Caco-2 (cell line): ENCODE measurements at regions of chr14 and their contacts with region 1.

Region 1: DNA sequence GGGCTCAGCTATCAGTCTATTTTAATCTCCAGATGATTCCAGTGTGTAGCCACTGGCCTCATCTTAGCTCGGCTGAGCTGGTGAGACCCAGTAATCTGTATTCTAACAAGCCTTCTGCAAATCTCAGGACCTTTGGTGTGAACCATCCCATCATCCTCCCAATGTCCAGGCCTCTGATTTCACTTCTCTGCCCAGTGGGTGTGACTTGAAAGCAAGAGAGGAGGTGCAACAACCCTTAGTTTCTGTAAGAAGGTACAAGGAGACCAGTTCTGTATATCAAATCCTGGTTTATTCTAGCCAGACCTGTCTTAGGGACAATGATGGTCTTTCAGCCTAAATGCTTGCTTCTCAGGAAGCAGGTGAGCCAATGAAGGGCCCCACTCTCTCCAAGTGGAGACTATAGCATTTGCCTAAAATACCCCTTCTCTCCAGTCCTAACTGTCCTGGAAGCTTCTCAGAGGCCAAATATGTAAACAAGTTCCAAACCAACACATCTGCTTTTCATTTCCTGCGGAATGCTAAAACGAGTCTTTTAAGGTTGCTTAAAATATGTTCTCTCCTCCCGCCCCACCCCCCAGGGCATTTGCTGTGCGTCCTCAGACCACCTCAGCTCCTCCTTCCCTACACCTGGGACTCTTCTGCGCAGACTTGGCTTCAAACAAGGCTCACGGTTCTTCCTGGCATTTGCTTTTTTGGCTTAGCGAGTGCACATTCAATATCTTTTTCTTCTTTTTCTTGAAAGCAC is 78.4 kb upstream of the FUT8 start:
- DNase-seq: peak; percentile 60 to 78
- H3K4me3 ChIP-seq: no peak overlapping the region
- H3K4me3 Mint-ChIP-seq: peak overlapping the region; percentile 63
- H3K27ac Mint-ChIP-seq: peak overlapping the region; percentile 96
- H3K4me1 ChIP-seq: peaks cover 96% of the 10 kb centered on the region
- H3K4me1 Mint-ChIP-seq: peaks cover 52% of the 10 kb centered on the region
- H3K27me3 ChIP-seq: no peaks in the 10 kb centered on the region
- H3K27me3 Mint-ChIP-seq: no peaks in the 10 kb centered on the region
- CTCF ChIP-seq: no peak

Region 2: GRCh38 chr14:65291531-65291930 is 42.6 kb before region 1 on chr14:
- CTCF ChIA-PET with region 1: no interaction called
- POLR2A ChIA-PET with region 1: no interaction called
- intact Hi-C with region 1: no loop called
- DNase-seq: no peak
- H3K4me3 ChIP-seq: no peak overlapping the region
- H3K4me3 Mint-ChIP-seq: no peak overlapping the region
- H3K27ac Mint-ChIP-seq: no peak overlapping the region
- H3K4me1 ChIP-seq: peaks cover 8% of the 10 kb centered on the region; the same call in 1 of the 2 replicates
- H3K4me1 Mint-ChIP-seq: peaks cover 16% of the 10 kb centered on the region
- H3K27me3 ChIP-seq: no peaks in the 10 kb centered on the region
- H3K27me3 Mint-ChIP-seq: no peaks in the 10 kb centered on the region
- CTCF ChIP-seq: no peak

Region 3: GRCh38 chr14:65302571-65303189 is 31.4 kb before region 1 on chr14:
- CTCF ChIA-PET with region 1: no interaction called
- POLR2A ChIA-PET with region 1: interaction called, 5 read pairs
- intact Hi-C with region 1: loop called (anchors 1 kb)
- DNase-seq: no peak
- H3K4me3 ChIP-seq: no peak overlapping the region
- H3K4me3 Mint-ChIP-seq: peak overlapping the region; percentile 12
- H3K27ac Mint-ChIP-seq: peak overlapping the region; percentile 80
- H3K4me1 ChIP-seq: peaks cover 67% of the 10 kb centered on the region
- H3K4me1 Mint-ChIP-seq: peaks cover 44% of the 10 kb centered on the region
- H3K27me3 ChIP-seq: no peaks in the 10 kb centered on the region
- H3K27me3 Mint-ChIP-seq: no peaks in the 10 kb centered on the region
- CTCF ChIP-seq: no peak

Region 4: GRCh38 chr14:65361920-65362319 is 27.8 kb after region 1 on chr14:
- CTCF ChIA-PET with region 1: interaction called, 3 read pairs
- POLR2A ChIA-PET with region 1: no interaction called
- intact Hi-C with region 1: loop called (anchors 2 kb)
- DNase-seq: no peak
- H3K4me3 ChIP-seq: no peak overlapping the region
- H3K4me3 Mint-ChIP-seq: no peak overlapping the region
- H3K27ac Mint-ChIP-seq: no peak overlapping the region
- H3K4me1 ChIP-seq: peaks cover 10% of the 10 kb centered on the region; the same call in 1 of the 2 replicates
- H3K4me1 Mint-ChIP-seq: peaks cover 7% of the 10 kb centered on the region
- H3K27me3 ChIP-seq: no peaks in the 10 kb centered on the region
- H3K27me3 Mint-ChIP-seq: no peaks in the 10 kb centered on the region
- CTCF ChIP-seq: no peak